MCF 10A (cell line): ENCODE measurements at regions of chr14 and their contacts with region 1.

Region 1: GRCh38 chr14:61269321-61270083 is 11.6 kb downstream of the TMEM30B start:
- DNase-seq: peak; percentile 90
- H3K4me3 Mint-ChIP-seq: peak overlapping the region; percentile 65
- H3K27ac Mint-ChIP-seq: no peak overlapping the region
- H3K4me1 Mint-ChIP-seq: no peaks in the 10 kb centered on the region
- H3K27me3 Mint-ChIP-seq: peaks cover 39% of the 10 kb centered on the region
- CTCF ChIP-seq: peak; percentile 79

Region 2: GRCh38 chr14:61103481-61104339 is 165.8 kb before region 1 on chr14:
- CTCF ChIA-PET with region 1: no interaction called
- POLR2A ChIA-PET with region 1: no interaction called
- intact Hi-C with region 1: no loop called
- DNase-seq: peak; percentile 91
- H3K4me3 Mint-ChIP-seq: peak overlapping the region; percentile 60
- H3K27ac Mint-ChIP-seq: peak overlapping the region; percentile 98
- H3K4me1 Mint-ChIP-seq: peaks cover 43% of the 10 kb centered on the region
- H3K27me3 Mint-ChIP-seq: no peaks in the 10 kb centered on the region
- CTCF ChIP-seq: no peak

Region 3: GRCh38 chr14:61160798-61161197 is 108.7 kb before region 1 on chr14:
- CTCF ChIA-PET with region 1: no interaction called
- POLR2A ChIA-PET with region 1: no interaction called
- intact Hi-C with region 1: no loop called
- DNase-seq: no peak
- H3K4me3 Mint-ChIP-seq: no peak overlapping the region
- H3K27ac Mint-ChIP-seq: no peak overlapping the region
- H3K4me1 Mint-ChIP-seq: no peaks in the 10 kb centered on the region
- H3K27me3 Mint-ChIP-seq: no peaks in the 10 kb centered on the region
- CTCF ChIP-seq: no peak

Region 4: DNA sequence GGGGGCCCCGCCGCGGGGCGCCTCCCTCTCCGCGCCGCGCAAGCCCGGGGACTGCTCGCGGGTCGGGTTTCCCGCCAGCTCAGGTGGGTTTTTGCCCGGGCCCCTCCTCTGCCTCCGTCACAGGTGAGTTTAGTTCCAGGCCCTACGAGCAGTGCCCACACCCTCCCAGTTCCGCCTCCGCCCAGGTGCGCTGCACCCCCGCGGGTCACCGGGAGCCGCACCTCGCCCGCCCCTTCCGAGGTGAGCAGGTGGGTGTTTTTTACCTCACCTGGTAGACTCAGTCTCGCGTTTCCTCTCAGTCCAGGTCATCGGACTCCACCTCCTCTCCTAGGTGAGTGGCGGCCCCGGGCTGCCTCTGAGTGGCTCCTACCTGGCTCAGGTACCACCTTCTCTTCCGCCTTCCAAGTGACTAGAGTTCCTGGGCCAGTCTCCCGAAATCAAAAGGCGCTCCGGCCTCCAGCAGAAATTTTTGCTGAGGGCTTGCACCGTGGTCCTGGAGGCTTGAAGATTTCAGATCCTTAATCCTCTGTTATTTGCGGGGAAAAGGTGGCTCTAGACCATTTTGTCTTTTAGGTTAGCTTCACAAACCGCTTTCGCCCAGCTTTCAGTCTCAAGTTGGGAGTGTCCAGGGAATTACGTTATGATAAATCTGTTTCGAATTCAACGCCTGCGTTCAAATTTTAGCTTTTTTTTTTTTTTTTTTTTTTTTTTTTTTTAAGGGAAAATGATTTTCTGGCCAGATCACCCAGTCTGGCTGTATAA is 11.9 kb after region 1 on chr14 and contains the start of gene TMEM30B:
- CTCF ChIA-PET with region 1: interaction called, 49 read pairs
- POLR2A ChIA-PET with region 1: interaction called, 3 read pairs
- intact Hi-C with region 1: loop called (anchors 1 kb)
- DNase-seq: no peak
- H3K4me3 Mint-ChIP-seq: peak within 1 kb of the TSS; percentile 45
- H3K27ac Mint-ChIP-seq: no peak within 1 kb of the TSS
- H3K4me1 Mint-ChIP-seq: no peaks in the 10 kb centered on the region
- H3K27me3 Mint-ChIP-seq: no peaks in the 10 kb centered on the region
- CTCF ChIP-seq: no peak
- total RNA-seq, gene TMEM30B: 0.09 and 0.22 TPM in 2 replicates

Region 5: GRCh38 chr14:61296719-61297502 is 27.4 kb after region 1 on chr14:
- CTCF ChIA-PET with region 1: interaction called, 11 read pairs
- POLR2A ChIA-PET with region 1: no interaction called
- intact Hi-C with region 1: no loop called
- DNase-seq: peak; percentile 61
- H3K4me3 Mint-ChIP-seq: no peak overlapping the region
- H3K27ac Mint-ChIP-seq: no peak overlapping the region
- H3K4me1 Mint-ChIP-seq: no peaks in the 10 kb centered on the region
- H3K27me3 Mint-ChIP-seq: no peaks in the 10 kb centered on the region
- CTCF ChIP-seq: peak; percentile 63

Region 6: DNA sequence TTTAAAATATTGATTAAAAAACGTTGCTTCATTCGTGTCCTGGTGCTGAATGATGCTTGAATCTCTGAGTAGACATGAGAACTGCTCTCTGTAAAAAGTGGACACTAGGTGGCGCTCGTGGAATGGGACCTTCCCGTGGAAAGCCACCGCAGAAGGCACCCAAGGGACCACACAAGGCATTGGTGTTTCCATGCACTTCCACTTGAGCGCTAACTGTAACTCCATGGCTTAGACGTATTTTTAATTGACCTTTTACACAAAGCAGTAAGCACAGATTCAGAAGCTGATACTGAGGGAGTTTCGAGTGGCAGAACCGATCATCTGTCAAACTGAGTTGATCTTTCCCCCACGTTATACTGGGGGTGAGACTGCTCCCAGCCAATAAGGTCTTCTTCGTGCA is 187.2 kb after region 1 on chr14:
- CTCF ChIA-PET with region 1: interaction called, 4 read pairs
- POLR2A ChIA-PET with region 1: no interaction called
- intact Hi-C with region 1: loop called (anchors 1 kb)
- DNase-seq: peak; percentile 79
- H3K4me3 Mint-ChIP-seq: no peak overlapping the region
- H3K27ac Mint-ChIP-seq: no peak overlapping the region
- H3K4me1 Mint-ChIP-seq: peaks cover 6% of the 10 kb centered on the region
- H3K27me3 Mint-ChIP-seq: no peaks in the 10 kb centered on the region
- CTCF ChIP-seq: peak; percentile 75

Region 7: GRCh38 chr14:61992139-61992538 is 722.6 kb after region 1 on chr14:
- CTCF ChIA-PET with region 1: no interaction called
- POLR2A ChIA-PET with region 1: no interaction called
- intact Hi-C with region 1: no loop called
- DNase-seq: no peak
- H3K4me3 Mint-ChIP-seq: no peak overlapping the region
- H3K27ac Mint-ChIP-seq: no peak overlapping the region
- H3K4me1 Mint-ChIP-seq: no peaks in the 10 kb centered on the region
- H3K27me3 Mint-ChIP-seq: no peaks in the 10 kb centered on the region
- CTCF ChIP-seq: no peak